ENCODE measurements at regions of chr12 and their contacts with region 1.

Region 1: DNA sequence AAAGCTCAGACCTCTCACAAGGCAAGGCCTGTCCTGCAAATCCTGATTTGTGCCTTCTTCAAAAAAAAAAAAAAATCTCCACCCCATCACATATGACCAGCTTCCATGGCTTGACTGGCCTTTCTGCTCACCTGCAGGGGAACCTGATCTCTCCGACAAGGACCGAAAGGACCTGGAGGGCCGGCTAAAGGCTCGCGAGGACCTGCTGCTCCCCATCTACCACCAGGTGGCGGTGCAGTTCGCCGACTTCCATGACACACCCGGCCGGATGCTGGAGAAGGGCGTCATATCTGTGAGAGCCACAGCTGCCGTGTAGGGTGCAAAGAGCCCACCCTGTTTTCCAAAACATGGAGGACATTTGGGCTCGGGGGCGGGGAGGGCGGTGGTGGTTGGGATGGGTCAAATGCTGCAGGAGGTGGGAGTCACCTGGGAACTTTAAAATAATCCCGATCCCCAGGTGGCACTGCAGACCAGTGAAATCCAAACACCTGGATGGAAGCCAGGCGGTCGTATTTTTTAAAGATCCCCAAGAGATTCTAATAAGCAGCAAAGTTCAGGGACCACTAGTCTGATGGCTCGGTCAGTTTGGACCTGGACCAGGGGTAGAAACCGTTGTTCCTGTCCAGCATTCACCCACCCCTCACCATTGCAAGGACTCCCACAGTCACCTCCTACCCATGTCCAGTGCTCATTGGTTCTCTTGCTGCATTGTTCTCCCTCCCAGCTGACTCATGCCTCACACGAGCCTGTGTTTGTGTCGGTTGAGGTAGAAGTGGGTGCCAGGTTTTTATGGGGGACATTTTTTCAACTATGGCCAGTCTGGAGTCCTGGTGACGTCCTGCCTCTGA is 44.8 kb downstream of the FOXN4 start:
- DNase-seq: peak; percentile 90
- H3K4me3 ChIP-seq: peak overlapping the region in 1 of 2 experiments; percentile 39; a peak in 1 of 4 replicates
- H3K27ac ChIP-seq: no peak overlapping the region
- H3K4me1 ChIP-seq: peaks cover 0 to 8% of the 10 kb centered on the region in 2 experiments; a peak in 1 of 4 replicates
- H3K27me3 ChIP-seq: no peaks in the 10 kb centered on the region
- CTCF ChIP-seq: peak; percentile 64
- EP300 ChIP-seq: no peak
- RAD21 ChIP-seq: peak; percentile 76

Region 2: GRCh38 chr12:108701779-108702441 is 562.4 kb before region 1 on chr12:
- CTCF ChIA-PET with region 1: no interaction called
- POLR2A ChIA-PET with region 1: no interaction called
- DNase-seq: no peak
- H3K4me3 ChIP-seq: no peak overlapping the region
- H3K27ac ChIP-seq: peak overlapping the region; percentile 35 to 90
- H3K4me1 ChIP-seq: peaks cover 38 to 50% of the 10 kb centered on the region in 2 experiments; a peak in 3 of 4 replicates
- H3K27me3 ChIP-seq: no peaks in the 10 kb centered on the region
- CTCF ChIP-seq: no peak
- EP300 ChIP-seq: no peak
- RAD21 ChIP-seq: no peak

Region 3: GRCh38 chr12:109098183-109099050 is 165.9 kb before region 1 on chr12:
- CTCF ChIA-PET with region 1: no interaction called
- POLR2A ChIA-PET with region 1: no interaction called
- DNase-seq: no peak
- H3K4me3 ChIP-seq: peak overlapping the region; percentile 66 to 70
- H3K27ac ChIP-seq: peak overlapping the region; percentile 77 to 80; a peak in 3 of 4 replicates
- H3K4me1 ChIP-seq: peaks cover 5% of the 10 kb centered on the region in 2 experiments; a peak in 2 of 4 replicates
- H3K27me3 ChIP-seq: no peaks in the 10 kb centered on the region
- CTCF ChIP-seq: no peak
- EP300 ChIP-seq: no peak
- RAD21 ChIP-seq: no peak

Region 4: GRCh38 chr12:109302358-109302757 is 38.0 kb after region 1 on chr12:
- CTCF ChIA-PET with region 1: interaction called, 10 read pairs
- POLR2A ChIA-PET with region 1: no interaction called
- DNase-seq: no peak
- H3K4me3 ChIP-seq: no peak overlapping the region
- H3K27ac ChIP-seq: no peak overlapping the region
- H3K4me1 ChIP-seq: peaks cover 0 to 3% of the 10 kb centered on the region in 2 experiments; a peak in 1 of 4 replicates
- H3K27me3 ChIP-seq: no peaks in the 10 kb centered on the region; the same call in 1 of the 2 replicates
- CTCF ChIP-seq: no peak; the same call in 1 of the 2 replicates
- EP300 ChIP-seq: no peak
- RAD21 ChIP-seq: no peak

Region 5: GRCh38 chr12:109331301-109331952 is 67.1 kb after region 1 on chr12:
- CTCF ChIA-PET with region 1: interaction called, 10 read pairs
- POLR2A ChIA-PET with region 1: no interaction called
- DNase-seq: peak; percentile 31
- H3K4me3 ChIP-seq: no peak overlapping the region
- H3K27ac ChIP-seq: peak overlapping the region in 1 of 2 experiments; percentile 54; a peak in 2 of 4 replicates
- H3K4me1 ChIP-seq: peaks cover 0 to 9% of the 10 kb centered on the region in 2 experiments; a peak in 1 of 4 replicates
- H3K27me3 ChIP-seq: no peaks in the 10 kb centered on the region
- CTCF ChIP-seq: no peak
- EP300 ChIP-seq: no peak
- RAD21 ChIP-seq: no peak; the same call in 1 of the 2 replicates

Region 6: DNA sequence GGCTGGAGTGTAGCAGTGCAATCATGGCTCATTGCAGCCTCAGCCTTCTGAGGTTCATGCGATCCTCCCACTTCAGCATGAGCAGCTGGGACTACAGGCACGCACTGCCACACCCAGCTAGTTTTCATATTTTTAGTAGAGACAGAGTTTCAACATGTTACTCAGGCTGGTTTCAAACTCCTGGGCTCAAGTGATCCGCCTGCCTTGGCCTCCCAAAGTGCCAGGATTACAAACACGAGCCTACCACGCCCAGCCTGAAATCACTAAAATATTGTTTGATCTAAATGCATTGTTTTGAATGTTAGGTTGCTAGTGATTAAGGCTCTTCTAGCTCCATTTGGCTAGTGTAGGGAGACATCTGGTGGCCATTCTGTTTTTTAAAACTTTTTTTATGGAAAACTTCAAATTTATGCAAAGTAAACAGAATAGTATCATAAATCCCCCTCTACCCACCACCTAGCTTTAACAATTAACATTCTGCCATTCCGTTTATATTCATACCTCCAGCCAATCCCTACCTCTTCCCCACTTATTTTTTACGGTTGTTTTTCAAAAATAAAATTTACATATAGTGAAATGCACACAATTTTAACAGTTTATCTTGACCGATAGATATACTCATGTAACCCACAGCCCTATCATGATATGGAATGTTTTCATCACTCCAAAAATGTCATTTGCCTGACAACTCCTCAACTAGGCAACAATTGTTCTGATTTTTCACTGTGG is 121.2 kb after region 1 on chr12:
- CTCF ChIA-PET with region 1: interaction called, 127 read pairs
- POLR2A ChIA-PET with region 1: no interaction called
- DNase-seq: peak; percentile 51
- H3K4me3 ChIP-seq: peak overlapping the region in 1 of 2 experiments; percentile 38; a peak in 1 of 4 replicates
- H3K27ac ChIP-seq: no peak overlapping the region
- H3K4me1 ChIP-seq: no peaks in the 10 kb centered on the region
- H3K27me3 ChIP-seq: peaks cover 6% of the 10 kb centered on the region; the same call in 1 of the 2 replicates
- CTCF ChIP-seq: peak; percentile 71
- EP300 ChIP-seq: no peak
- RAD21 ChIP-seq: peak; percentile 98

Measured in SK-N-SH (cell line).